ENCODE measurements at regions of chr22 and their contacts with region 1.

Region 1: DNA sequence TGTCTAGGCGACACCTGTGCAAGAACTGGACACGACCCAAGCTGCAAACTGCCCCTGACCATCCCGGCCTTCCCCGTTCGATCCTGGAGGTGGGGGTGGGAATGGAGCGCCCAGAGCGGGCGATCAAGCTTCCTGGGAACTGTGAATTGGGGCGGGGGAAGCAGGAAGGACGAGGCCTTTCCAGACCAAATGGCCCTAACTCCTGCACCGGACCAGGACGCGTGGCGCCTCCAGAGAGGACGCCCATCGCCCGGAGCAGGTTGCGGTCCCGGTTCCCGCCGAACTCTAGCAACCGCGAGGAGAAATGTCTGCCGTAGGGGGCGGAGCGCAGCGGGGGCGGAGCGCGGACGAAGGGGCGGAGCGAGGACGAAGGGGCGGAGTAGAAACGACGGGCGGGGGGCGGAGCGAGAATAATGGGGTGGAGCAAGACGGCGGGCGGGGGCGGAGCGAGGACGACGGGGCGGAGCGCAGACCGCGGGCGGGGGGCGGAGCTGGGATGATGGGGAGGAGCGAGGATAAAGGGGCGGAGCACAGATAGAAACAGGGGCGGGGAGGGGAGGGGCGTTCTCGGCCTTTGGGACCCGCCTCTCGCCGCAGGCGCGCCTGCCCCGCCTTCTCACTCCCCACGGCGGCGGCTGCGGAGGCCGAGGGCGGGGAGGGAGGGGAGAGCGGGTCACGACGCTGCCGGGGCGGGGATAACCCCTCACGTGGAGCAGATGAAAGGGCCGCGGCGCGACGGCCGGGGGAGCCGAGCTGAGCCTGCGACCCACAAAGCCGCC is at the start of gene ZNRF3:
- DNase-seq: peak; percentile 88 to 94 (median 91)
- H3K4me3 ChIP-seq: peak within 1 kb of the TSS; percentile 60 to 93 (median 72)
- H3K4me3 Mint-ChIP-seq: peak within 1 kb of the TSS; percentile 87 to 93
- H3K27ac ChIP-seq: no peak within 1 kb of the TSS
- H3K27ac Mint-ChIP-seq: peak within 1 kb of the TSS in 5 of 7 donors; percentile 16 to 77 (median 45)
- H3K4me1 ChIP-seq: peaks cover 12 to 17% of the 10 kb centered on the region in 2 donors
- H3K4me1 Mint-ChIP-seq: peaks cover 14% of the 10 kb centered on the region
- H3K27me3 ChIP-seq: peaks cover 16 to 22% of the 10 kb centered on the region in 2 donors
- H3K27me3 Mint-ChIP-seq: peaks cover 24 to 41% (median 27%) of the 10 kb centered on the region in 3 donors
- CTCF ChIP-seq: no peak
- polyA plus RNA-seq, gene ZNRF3: 0.13 TPM in 1 of 3 donors, not detected in the others

Region 2: DNA sequence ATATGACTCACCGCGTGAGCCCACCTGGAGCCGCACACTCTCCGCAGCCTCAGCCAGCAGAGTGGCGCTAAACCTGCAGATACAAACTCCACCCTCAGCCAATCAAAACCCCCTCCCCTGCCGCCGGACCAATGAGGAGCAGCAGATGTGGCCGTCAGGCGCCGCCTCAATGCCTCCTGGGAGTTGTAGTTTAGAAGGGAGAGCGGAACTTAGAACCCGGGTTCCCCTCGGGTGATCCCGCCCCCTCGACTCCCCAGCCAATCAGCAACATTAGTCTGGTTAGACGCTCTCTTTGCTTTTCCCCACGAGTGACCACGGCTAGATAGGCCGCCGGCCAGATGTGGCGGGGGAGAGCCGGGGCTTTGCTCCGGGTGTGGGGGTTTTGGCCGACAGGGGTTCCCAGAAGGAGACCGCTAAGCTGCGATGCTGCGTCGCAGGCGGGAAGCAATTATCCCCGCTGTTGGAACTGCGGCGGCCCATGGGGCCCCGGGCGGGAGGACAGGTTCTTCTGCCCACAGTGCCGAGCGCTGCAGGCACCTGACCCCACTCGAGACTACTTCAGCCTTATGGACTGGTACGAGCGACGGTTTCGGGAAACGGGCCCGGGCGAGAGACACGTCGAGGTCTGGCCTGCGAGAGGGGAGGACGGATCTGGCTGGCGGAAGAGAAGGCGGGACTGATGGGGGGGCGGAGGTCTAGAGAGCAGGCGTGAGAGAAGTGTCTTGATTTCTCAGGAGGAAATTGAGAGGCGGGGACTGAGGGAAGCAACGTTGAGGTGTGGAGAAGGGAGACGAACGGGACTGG is 141.1 kb before region 1 on chr22 and contains the starts of genes CHEK2 and HSCB:
- intact Hi-C with region 1: loop called in 1 of 2 experiments (anchors 5 kb)
- DNase-seq: peak; percentile 96 to 98 (median 97)
- H3K4me3 ChIP-seq: peak within 1 kb of the TSS; percentile 66 to 100 (median 91)
- H3K4me3 Mint-ChIP-seq: peak within 1 kb of the TSS; percentile 96 to 98
- H3K27ac ChIP-seq: peak within 1 kb of the TSS; percentile 85 to 89
- H3K27ac Mint-ChIP-seq: peak within 1 kb of the TSS; percentile 92 to 98 (median 96)
- H3K4me1 ChIP-seq: peaks cover 11 to 22% of the 10 kb centered on the region in 2 donors
- H3K4me1 Mint-ChIP-seq: peaks cover 25% of the 10 kb centered on the region
- H3K27me3 ChIP-seq: no peaks in the 10 kb centered on the region
- H3K27me3 Mint-ChIP-seq: no peaks in the 10 kb centered on the region
- CTCF ChIP-seq: no peak
- polyA plus RNA-seq, gene CHEK2: 6.6 to 13.1 (median 7.8) TPM
- polyA plus RNA-seq, gene HSCB: 10.1 to 13.2 (median 10.3) TPM

Region 3: DNA sequence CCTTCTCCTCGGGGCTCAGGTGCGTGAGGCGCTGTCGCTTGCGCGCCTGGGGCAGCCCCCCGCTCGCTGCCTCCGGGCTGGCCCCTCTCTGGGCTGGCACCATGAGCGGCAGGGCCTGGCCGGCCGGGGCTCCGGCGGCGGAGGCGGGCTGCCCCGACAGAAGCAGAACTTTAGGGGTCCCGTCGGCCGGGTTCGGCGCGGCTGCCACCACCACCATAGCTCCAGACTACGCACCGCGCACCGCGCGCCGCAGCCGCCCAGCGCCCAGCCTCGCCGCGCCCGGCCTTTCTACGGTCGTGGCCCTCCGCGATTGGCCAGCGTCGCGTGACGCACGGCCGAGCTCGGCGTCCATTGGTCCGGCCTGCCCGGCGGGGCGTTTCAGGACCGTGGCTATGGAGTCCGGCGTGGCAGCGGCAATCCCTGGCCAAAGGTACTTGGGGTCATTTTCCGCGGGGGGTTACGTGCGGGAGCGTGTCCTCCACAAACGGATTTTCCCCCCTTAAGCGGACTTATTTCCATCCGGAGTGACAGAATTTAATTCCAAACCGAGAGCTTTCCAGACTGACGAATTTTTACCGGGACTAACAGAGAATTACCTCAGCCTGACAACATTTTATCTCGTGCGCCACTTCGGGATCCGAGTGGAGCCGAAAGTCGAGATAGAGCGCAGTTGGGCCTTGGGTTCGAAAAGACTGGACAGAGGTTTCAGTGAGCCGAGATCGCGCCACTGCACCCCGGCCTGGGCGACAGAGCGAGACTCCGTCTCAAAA is 82.6 kb before region 1 on chr22 and contains the start of gene XBP1:
- intact Hi-C with region 1: loop called in 1 of 2 experiments (anchors 10 kb)
- DNase-seq: peak; percentile 92 to 96 (median 96)
- H3K4me3 ChIP-seq: peak within 1 kb of the TSS; percentile 91 to 98 (median 94)
- H3K4me3 Mint-ChIP-seq: peak within 1 kb of the TSS; percentile 91 to 98
- H3K27ac ChIP-seq: peak within 1 kb of the TSS; percentile 98 to 99
- H3K27ac Mint-ChIP-seq: peak within 1 kb of the TSS; percentile 98 to 100 (median 99)
- H3K4me1 ChIP-seq: peaks cover 39 to 50% of the 10 kb centered on the region in 2 donors
- H3K4me1 Mint-ChIP-seq: peaks cover 50% of the 10 kb centered on the region
- H3K27me3 ChIP-seq: no peaks in the 10 kb centered on the region
- H3K27me3 Mint-ChIP-seq: peaks cover 0 to 7% (median 1%) of the 10 kb centered on the region in 3 donors
- CTCF ChIP-seq: no peak
- polyA plus RNA-seq, gene XBP1: 175 to 215 (median 201) TPM

Region 4: DNA sequence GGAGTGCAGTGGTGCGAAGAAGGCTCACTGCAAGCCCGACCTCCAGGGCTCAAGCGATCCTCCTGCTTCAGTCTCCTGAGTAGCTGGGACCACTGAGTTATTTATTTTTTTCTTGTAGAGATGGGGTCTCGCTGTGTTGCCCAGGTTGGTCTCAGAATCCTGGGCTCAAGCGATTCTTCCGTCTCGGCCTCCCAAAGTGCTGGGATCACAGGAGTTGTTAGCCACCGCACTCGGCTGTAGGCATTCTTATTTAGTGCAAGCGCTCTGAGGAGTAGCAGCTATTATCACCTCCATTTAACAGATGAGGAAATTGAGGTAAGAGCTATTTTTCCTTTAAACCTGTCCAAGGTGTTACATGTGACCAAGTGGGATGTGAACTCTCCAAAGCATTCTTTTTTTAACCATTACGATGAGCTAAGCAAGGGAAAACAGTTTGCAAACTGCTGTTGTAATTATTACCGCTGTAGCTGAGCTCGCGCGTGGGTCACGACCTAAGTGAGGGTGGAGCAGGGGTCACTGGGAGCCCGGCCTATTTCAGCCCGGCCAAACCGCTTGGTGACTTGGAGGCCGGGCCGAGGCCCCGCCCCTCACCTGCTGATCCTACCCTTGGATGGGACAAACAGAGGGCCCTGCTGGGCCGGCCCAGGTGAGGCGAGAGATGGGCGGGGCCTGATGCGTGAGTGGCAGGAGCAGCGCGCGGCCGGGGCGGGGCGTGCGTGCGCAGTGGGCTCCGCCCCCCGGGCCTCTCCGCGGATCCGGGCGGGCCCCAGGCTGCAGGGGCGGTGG is 189.3 kb after region 1 on chr22:
- intact Hi-C with region 1: loop called in 1 of 2 experiments (anchors 10 kb)
- DNase-seq: peak; percentile 47 to 60 (median 52)
- H3K4me3 ChIP-seq: peak overlapping the region; percentile 38 to 78 (median 47)
- H3K4me3 Mint-ChIP-seq: peak overlapping the region; percentile 76 to 87
- H3K27ac ChIP-seq: no peak overlapping the region
- H3K27ac Mint-ChIP-seq: peak overlapping the region in 1 of 7 donors; percentile 54
- H3K4me1 ChIP-seq: peaks cover 28 to 32% of the 10 kb centered on the region in 2 donors
- H3K4me1 Mint-ChIP-seq: peaks cover 27% of the 10 kb centered on the region
- H3K27me3 ChIP-seq: peaks cover 63 to 77% of the 10 kb centered on the region in 2 donors
- H3K27me3 Mint-ChIP-seq: peaks cover 64 to 81% (median 74%) of the 10 kb centered on the region in 3 donors
- CTCF ChIP-seq: no peak

Measured in CD14-positive monocyte (primary cell).